B cell (primary cell): ENCODE measurements at regions of chr16 and their contacts with region 1.

Region 1: GRCh38 chr16:84504420-84505248 is at the start of gene MEAK7:
- DNase-seq: peak; percentile 98
- ATAC-seq: peak; percentile 97
- H3K4me3 ChIP-seq: peak within 1 kb of the TSS; percentile 63 to 88 (median 77)
- H3K4me3 Mint-ChIP-seq: peak within 1 kb of the TSS; percentile 95
- H3K27ac ChIP-seq: peak within 1 kb of the TSS; percentile 47 to 65
- H3K27ac Mint-ChIP-seq: peak within 1 kb of the TSS; percentile 90
- H3K4me1 ChIP-seq: peaks cover 33 to 44% of the 10 kb centered on the region in 2 donors
- H3K4me1 Mint-ChIP-seq: peaks cover 49% of the 10 kb centered on the region
- H3K27me3 ChIP-seq: no peaks in the 10 kb centered on the region
- H3K27me3 Mint-ChIP-seq: no peaks in the 10 kb centered on the region
- CTCF ChIP-seq: no peak
- total RNA-seq, gene MEAK7: 19.3 and 23.0 TPM in 2 replicates

Region 2: GRCh38 chr16:84277237-84277823 is 227.3 kb before region 1 on chr16:
- CTCF ChIA-PET with region 1: interaction called, 20 read pairs
- POLR2A ChIA-PET with region 1: no interaction called
- intact Hi-C with region 1: no loop called
- DNase-seq: peak; percentile 69
- ATAC-seq: peak; percentile 60
- H3K4me3 ChIP-seq: no peak overlapping the region
- H3K4me3 Mint-ChIP-seq: no peak overlapping the region
- H3K27ac ChIP-seq: no peak overlapping the region
- H3K27ac Mint-ChIP-seq: no peak overlapping the region
- H3K4me1 ChIP-seq: no peaks in the 10 kb centered on the region
- H3K4me1 Mint-ChIP-seq: no peaks in the 10 kb centered on the region
- H3K27me3 ChIP-seq: peaks cover 0 to 6% (median 0%) of the 10 kb centered on the region in 4 experiments
- H3K27me3 Mint-ChIP-seq: peaks cover 13% of the 10 kb centered on the region
- CTCF ChIP-seq: peak; percentile 84

Region 3: DNA sequence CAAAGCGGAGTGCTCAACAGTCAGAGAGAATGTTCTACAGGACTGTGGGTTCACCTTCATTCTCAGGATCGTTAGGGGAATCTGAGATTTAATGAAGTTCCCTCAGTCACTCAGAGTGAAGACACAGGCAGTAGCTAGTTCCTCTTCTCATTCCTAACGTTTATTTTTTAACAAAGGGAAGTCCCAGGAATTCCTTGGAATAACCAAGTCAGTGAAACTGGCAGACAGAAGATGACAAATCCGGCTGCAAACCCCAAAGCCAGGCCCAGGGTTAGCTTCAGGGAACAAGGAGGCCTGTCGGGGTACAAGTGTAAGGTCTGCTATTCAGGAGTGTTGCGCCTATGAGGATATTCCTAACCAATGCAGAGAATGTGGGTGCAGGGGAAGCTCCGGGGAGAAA is 71.3 kb after region 1 on chr16:
- CTCF ChIA-PET with region 1: no interaction called
- POLR2A ChIA-PET with region 1: no interaction called
- intact Hi-C with region 1: no loop called
- DNase-seq: no peak
- ATAC-seq: no peak
- H3K4me3 ChIP-seq: no peak overlapping the region
- H3K4me3 Mint-ChIP-seq: no peak overlapping the region
- H3K27ac ChIP-seq: peak overlapping the region in 1 of 2 donors; percentile 69
- H3K27ac Mint-ChIP-seq: peak overlapping the region; percentile 73
- H3K4me1 ChIP-seq: peaks cover 12 to 79% of the 10 kb centered on the region in 2 donors
- H3K4me1 Mint-ChIP-seq: peaks cover 72% of the 10 kb centered on the region
- H3K27me3 ChIP-seq: no peaks in the 10 kb centered on the region
- H3K27me3 Mint-ChIP-seq: no peaks in the 10 kb centered on the region
- CTCF ChIP-seq: no peak

Region 4: DNA sequence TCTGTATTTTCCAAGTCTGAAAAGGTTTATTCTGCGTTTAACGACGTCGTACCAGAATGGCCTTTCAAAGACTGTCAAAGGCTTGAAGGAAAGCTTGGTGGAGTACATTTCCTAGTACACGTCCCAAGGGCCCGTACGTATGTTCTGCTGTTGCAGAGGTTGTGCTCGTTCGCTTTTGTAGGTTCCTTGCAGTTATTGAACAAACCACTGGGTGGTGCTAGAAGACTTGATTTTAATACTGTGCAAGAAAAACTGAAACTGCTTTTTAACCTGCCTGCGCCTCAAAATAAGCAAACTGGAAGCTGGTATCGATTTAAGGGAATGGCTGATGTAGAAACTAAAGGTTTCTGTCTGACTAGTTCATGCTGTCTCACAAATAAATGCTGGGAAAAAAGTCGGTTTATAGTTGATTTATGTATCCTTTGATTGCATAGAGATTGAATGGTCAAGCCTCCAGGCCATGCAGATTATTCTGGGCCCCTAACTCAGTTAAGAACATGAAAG is 249.8 kb after region 1 on chr16:
- CTCF ChIA-PET with region 1: interaction called, 16 read pairs
- POLR2A ChIA-PET with region 1: no interaction called
- intact Hi-C with region 1: no loop called
- DNase-seq: peak; percentile 89
- ATAC-seq: peak; percentile 88
- H3K4me3 ChIP-seq: peak overlapping the region in 1 of 5 experiments; percentile 21
- H3K4me3 Mint-ChIP-seq: peak overlapping the region; percentile 12
- H3K27ac ChIP-seq: no peak overlapping the region
- H3K27ac Mint-ChIP-seq: peak overlapping the region; percentile 57
- H3K4me1 ChIP-seq: peaks cover 44 to 47% of the 10 kb centered on the region in 2 donors
- H3K4me1 Mint-ChIP-seq: peaks cover 72% of the 10 kb centered on the region
- H3K27me3 ChIP-seq: no peaks in the 10 kb centered on the region
- H3K27me3 Mint-ChIP-seq: no peaks in the 10 kb centered on the region
- CTCF ChIP-seq: peak; percentile 91